WTC11 (cell line): ENCODE measurements at regions of chr6 and their contacts with region 1.

Region 1: GRCh38 chr6:31822036-31822821 is 5.3 kb upstream of the HSPA1B start:
- DNase-seq: peak; percentile 58
- ATAC-seq: peak; percentile 7
- H3K4me3 Mint-ChIP-seq: peak overlapping the region; percentile 91
- H3K27ac Mint-ChIP-seq: peak overlapping the region; percentile 98
- H3K4me1 Mint-ChIP-seq: peaks cover 71% of the 10 kb centered on the region
- H3K27me3 Mint-ChIP-seq: no peaks in the 10 kb centered on the region; the same call in 1 of the 2 replicates
- CTCF ChIP-seq: no peak

Region 2: GRCh38 chr6:31806465-31807272 is 15.6 kb before region 1 on chr6 and contains the start of gene LSM2:
- CTCF ChIA-PET with region 1: interaction called, 10 read pairs
- POLR2A ChIA-PET with region 1: interaction called, 23 read pairs
- DNase-seq: peak; percentile 98
- ATAC-seq: peak; percentile 95
- H3K4me3 Mint-ChIP-seq: peak within 1 kb of the TSS; percentile 99
- H3K27ac Mint-ChIP-seq: peak within 1 kb of the TSS; percentile 99
- H3K4me1 Mint-ChIP-seq: peaks cover 9% of the 10 kb centered on the region
- H3K27me3 Mint-ChIP-seq: no peaks in the 10 kb centered on the region; the same call in 1 of the 2 replicates
- CTCF ChIP-seq: no peak
- total RNA-seq, gene LSM2: 104 to 121 TPM (median 119 TPM) in 3 replicates

Region 3: DNA sequence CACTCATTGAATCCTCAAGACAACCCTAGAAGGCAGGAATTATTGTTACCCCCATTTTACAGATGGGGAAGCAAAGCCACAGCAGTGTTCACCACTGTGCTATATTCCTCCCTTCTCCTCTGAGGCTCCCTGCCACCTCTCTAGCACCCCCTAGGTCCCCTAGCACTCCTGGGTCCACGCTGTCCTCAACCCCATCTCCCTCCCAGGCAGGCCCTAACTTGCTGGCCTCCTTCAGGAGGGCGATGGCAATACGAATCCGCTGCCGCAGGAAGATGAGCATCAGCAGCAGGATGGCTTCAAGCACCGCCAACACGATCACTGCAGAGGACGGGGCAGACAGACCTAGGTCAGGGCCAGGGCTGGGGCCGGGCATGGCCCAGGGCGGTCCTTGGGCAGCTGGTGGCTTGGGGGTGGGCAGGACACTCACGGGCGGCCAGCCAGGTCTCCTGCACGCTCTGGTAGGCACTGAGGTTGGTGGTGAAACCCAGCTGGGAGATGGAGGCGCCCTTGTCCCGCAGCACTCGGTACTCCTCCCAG is 48.2 kb after region 1 on chr6:
- CTCF ChIA-PET with region 1: no interaction called
- POLR2A ChIA-PET with region 1: no interaction called
- DNase-seq: peak; percentile 29
- ATAC-seq: peak; percentile 68
- H3K4me3 Mint-ChIP-seq: no peak overlapping the region
- H3K27ac Mint-ChIP-seq: no peak overlapping the region
- H3K4me1 Mint-ChIP-seq: peaks cover 9% of the 10 kb centered on the region
- H3K27me3 Mint-ChIP-seq: no peaks in the 10 kb centered on the region
- CTCF ChIP-seq: no peak

Region 4: GRCh38 chr6:31907158-31907813 is 85.1 kb after region 1 on chr6:
- CTCF ChIA-PET with region 1: no interaction called
- POLR2A ChIA-PET with region 1: no interaction called
- DNase-seq: no peak
- ATAC-seq: no peak
- H3K4me3 Mint-ChIP-seq: no peak overlapping the region
- H3K27ac Mint-ChIP-seq: no peak overlapping the region
- H3K4me1 Mint-ChIP-seq: peaks cover 14% of the 10 kb centered on the region
- H3K27me3 Mint-ChIP-seq: peaks cover 5% of the 10 kb centered on the region
- CTCF ChIP-seq: no peak